ENCODE measurements at regions of chr12 and their contacts with region 1.

Region 1: GRCh38 chr12:674272-674781 is 11.1 kb upstream of the NINJ2 start:
- DNase-seq: peak; percentile 92
- H3K4me3 Mint-ChIP-seq: peak overlapping the region; percentile 73
- H3K27ac Mint-ChIP-seq: peak overlapping the region; percentile 96
- H3K4me1 Mint-ChIP-seq: peaks cover 65% of the 10 kb centered on the region
- H3K27me3 Mint-ChIP-seq: no peaks in the 10 kb centered on the region

Region 2: GRCh38 chr12:630656-631632 is 43.4 kb before region 1 on chr12:
- intact Hi-C with region 1: loop called (anchors 2 kb)
- DNase-seq: peak; percentile 96
- H3K4me3 Mint-ChIP-seq: peak overlapping the region; percentile 93
- H3K27ac Mint-ChIP-seq: peak overlapping the region; percentile 99
- H3K4me1 Mint-ChIP-seq: peaks cover 42% of the 10 kb centered on the region
- H3K27me3 Mint-ChIP-seq: no peaks in the 10 kb centered on the region

Region 3: GRCh38 chr12:662566-663292 is 11.6 kb before region 1 on chr12:
- intact Hi-C with region 1: loop called (anchors 1 kb)
- DNase-seq: no peak
- H3K4me3 Mint-ChIP-seq: peak overlapping the region; percentile 77
- H3K27ac Mint-ChIP-seq: peak overlapping the region; percentile 92
- H3K4me1 Mint-ChIP-seq: peaks cover 46% of the 10 kb centered on the region
- H3K27me3 Mint-ChIP-seq: no peaks in the 10 kb centered on the region

Region 4: DNA sequence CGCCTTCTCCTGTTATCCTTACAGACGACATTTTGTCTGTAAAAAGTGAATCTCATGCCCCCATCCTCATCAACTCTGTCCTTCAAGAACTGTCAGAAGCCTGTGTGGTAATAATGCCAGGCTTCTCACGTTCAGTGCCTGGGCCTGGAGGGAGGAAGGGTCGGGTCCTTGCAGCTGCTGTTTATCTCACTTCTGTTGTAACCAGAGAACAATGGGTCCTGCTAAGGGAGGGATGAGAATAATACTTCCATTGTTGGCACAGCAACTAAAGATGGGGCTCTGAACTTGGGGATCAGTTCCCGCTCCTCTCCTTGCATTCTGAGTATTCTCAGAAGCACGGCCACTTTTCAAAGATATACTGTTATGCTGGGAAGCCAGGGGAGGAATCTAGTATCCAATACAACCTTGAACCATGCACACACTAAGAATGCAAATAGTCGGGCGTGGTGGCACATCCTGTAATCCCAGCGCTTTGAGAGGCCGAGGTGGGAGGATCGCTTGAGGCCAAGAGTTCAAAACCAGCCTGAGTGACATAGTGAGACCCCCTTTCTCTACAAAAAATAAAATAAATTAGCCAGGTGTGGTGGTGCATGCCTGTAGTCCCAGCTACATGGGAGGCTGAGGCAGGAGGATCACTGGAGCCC is 27.7 kb after region 1 on chr12:
- intact Hi-C with region 1: no loop called
- DNase-seq: no peak
- H3K4me3 Mint-ChIP-seq: no peak overlapping the region
- H3K27ac Mint-ChIP-seq: no peak overlapping the region
- H3K4me1 Mint-ChIP-seq: peaks cover 14% of the 10 kb centered on the region
- H3K27me3 Mint-ChIP-seq: no peaks in the 10 kb centered on the region

Region 5: GRCh38 chr12:712172-712863 is 38.0 kb after region 1 on chr12:
- intact Hi-C with region 1: loop called (anchors 1 kb)
- DNase-seq: no peak
- H3K4me3 Mint-ChIP-seq: peak overlapping the region; percentile 25
- H3K27ac Mint-ChIP-seq: peak overlapping the region; percentile 81
- H3K4me1 Mint-ChIP-seq: peaks cover 26% of the 10 kb centered on the region
- H3K27me3 Mint-ChIP-seq: no peaks in the 10 kb centered on the region

Region 6: GRCh38 chr12:795305-795704 is 121.0 kb after region 1 on chr12:
- intact Hi-C with region 1: loop called (anchors 1 kb)
- DNase-seq: peak; percentile 78
- H3K4me3 Mint-ChIP-seq: peak overlapping the region; percentile 68
- H3K27ac Mint-ChIP-seq: peak overlapping the region; percentile 94
- H3K4me1 Mint-ChIP-seq: peaks cover 58% of the 10 kb centered on the region
- H3K27me3 Mint-ChIP-seq: no peaks in the 10 kb centered on the region